Activated CD4-positive, alpha-beta T cell treated with anti-CD3 and anti-CD28 coated beads for 36 hours (primary cell): ENCODE measurements at regions of chr15 and their contacts with region 1.

Region 1: DNA sequence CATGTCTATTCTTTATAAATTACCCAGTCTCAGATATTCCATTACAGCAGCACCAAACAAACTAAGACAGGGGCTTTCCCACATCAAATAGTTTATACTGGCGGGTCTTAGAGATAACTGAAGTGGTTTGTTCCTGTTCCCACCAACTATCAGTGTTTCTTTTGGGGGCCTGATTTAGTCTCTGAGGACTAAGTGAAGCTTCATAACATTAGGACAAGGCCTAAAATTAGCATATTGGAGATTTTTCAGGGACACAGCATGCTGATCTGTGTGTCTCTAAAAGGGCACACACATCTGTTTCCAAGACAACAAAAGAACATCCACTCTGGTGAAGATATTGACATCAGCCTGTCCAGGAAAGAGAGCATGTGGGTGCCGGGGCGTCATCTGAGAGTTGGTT is 72.6 kb upstream of the SEMA6D start:
- DNase-seq: no peak
- ATAC-seq: no peak
- H3K4me3 Mint-ChIP-seq: no peak overlapping the region
- H3K27ac Mint-ChIP-seq: no peak overlapping the region
- H3K4me1 Mint-ChIP-seq: no peaks in the 10 kb centered on the region
- H3K27me3 Mint-ChIP-seq: peaks cover 3% of the 10 kb centered on the region

Region 2: DNA sequence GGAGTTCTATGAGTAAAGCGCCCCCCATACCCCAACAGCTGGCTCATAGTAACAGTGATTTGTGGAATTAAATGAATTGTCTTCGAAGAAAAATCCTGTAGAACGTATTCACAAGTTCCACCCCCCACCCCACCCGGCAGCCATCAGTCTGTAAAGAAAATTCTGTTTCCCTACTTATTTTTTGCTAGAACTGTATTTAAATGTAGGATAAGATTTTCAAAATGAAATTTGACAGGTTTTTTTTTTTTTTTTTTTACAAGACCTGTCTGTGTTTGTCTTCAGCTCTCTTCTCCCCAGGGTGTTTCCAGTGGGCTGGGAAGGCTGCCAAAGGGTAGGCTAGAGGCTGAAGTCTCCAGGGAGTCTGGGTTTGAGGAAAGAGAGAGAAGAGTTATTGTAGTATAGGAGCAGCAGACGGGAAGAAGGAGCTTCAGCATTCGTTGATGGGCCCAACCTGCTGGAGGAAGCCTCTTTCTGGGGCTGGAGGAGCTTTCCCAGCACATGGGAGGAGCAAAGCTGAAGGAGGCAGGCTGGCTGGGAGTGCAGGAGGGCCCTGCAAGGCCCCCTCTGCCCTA is 58.0 kb before region 1 on chr15:
- CTCF ChIA-PET with region 1: no interaction called
- POLR2A ChIA-PET with region 1: no interaction called
- intact Hi-C with region 1: loop called in 1 of 2 experiments (anchors 10 kb)
- DNase-seq: no peak
- ATAC-seq: no peak
- H3K4me3 Mint-ChIP-seq: no peak overlapping the region
- H3K27ac Mint-ChIP-seq: no peak overlapping the region
- H3K4me1 Mint-ChIP-seq: no peaks in the 10 kb centered on the region
- H3K27me3 Mint-ChIP-seq: peaks cover 3% of the 10 kb centered on the region